ENCODE measurements at regions of chr2 and their contacts with region 1.

Region 1: GRCh38 chr2:202870431-202871299 is 901 bp downstream of the ICA1L start:
- DNase-seq: peak; percentile 88 to 89
- H3K4me3 ChIP-seq: peak overlapping the region; percentile 94
- H3K4me3 Mint-ChIP-seq: peak overlapping the region; percentile 78
- H3K27ac Mint-ChIP-seq: peak overlapping the region; percentile 77
- H3K4me1 ChIP-seq: peaks cover 5% of the 10 kb centered on the region; the same call in 1 of the 2 replicates
- H3K4me1 Mint-ChIP-seq: no peaks in the 10 kb centered on the region
- H3K27me3 ChIP-seq: no peaks in the 10 kb centered on the region
- H3K27me3 Mint-ChIP-seq: no peaks in the 10 kb centered on the region
- CTCF ChIP-seq: peak; percentile 71 to 79

Region 2: GRCh38 chr2:202577250-202578183 is 293.1 kb before region 1 on chr2:
- CTCF ChIA-PET with region 1: interaction called, 3 read pairs
- POLR2A ChIA-PET with region 1: no interaction called
- intact Hi-C with region 1: loop called (anchors 1 kb)
- DNase-seq: no peak
- H3K4me3 ChIP-seq: no peak overlapping the region
- H3K4me3 Mint-ChIP-seq: no peak overlapping the region
- H3K27ac Mint-ChIP-seq: no peak overlapping the region
- H3K4me1 ChIP-seq: no peaks in the 10 kb centered on the region
- H3K4me1 Mint-ChIP-seq: no peaks in the 10 kb centered on the region
- H3K27me3 ChIP-seq: no peaks in the 10 kb centered on the region
- H3K27me3 Mint-ChIP-seq: no peaks in the 10 kb centered on the region
- CTCF ChIP-seq: no peak

Region 3: DNA sequence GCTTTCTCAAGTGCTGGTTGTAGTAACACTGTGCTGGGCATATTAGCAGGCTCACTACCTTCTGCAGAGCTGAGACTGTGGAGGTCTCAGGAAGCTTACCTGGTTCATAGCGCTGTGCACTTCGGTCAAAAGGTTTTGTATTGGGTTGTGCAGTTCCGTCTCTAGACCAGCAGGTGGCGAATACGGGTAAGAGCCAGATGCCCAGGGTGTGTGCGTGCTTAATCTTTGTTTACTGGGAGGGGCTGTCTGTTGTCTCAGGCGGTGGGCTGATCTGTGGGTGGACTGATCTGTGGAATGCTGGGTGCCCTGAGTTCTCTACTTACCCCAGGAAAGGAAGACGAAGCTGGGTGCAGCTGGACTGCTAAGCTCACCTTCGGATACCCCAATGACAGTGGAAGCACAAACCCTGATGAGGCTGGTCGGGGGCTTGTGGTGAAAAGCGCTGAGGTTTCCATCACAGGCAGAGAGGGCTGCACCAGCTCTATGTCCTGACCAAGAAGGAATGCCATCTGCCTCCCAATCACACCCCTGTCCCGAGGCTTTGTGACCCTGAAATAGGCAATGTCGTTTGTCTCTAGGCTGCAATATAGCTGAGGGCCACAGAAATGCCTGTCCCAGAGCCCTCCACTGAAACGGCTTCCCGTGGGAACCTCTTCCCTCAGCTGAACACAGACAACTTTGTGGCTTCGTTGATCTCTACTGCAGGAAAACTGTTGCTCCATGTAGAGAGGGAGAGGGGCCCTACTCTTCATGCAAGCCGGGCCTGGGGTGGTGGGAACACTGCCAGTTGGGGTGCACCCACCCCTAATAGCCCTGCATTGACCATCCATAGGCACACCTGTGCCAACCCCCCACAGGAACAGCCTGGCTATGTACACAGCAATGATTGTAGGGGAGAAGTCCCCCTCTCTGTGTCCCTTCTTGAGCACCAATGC is 281.8 kb before region 1 on chr2:
- CTCF ChIA-PET with region 1: interaction called, 5 read pairs
- POLR2A ChIA-PET with region 1: no interaction called
- intact Hi-C with region 1: loop called (anchors 1 kb)
- DNase-seq: peak; percentile 81 to 86
- H3K4me3 ChIP-seq: no peak overlapping the region
- H3K4me3 Mint-ChIP-seq: peak overlapping the region; percentile 40
- H3K27ac Mint-ChIP-seq: no peak overlapping the region
- H3K4me1 ChIP-seq: peaks cover 11% of the 10 kb centered on the region
- H3K4me1 Mint-ChIP-seq: peaks cover 9% of the 10 kb centered on the region
- H3K27me3 ChIP-seq: no peaks in the 10 kb centered on the region
- H3K27me3 Mint-ChIP-seq: no peaks in the 10 kb centered on the region
- CTCF ChIP-seq: peak; percentile 85 to 86

Region 4: GRCh38 chr2:202634556-202635427 is 235.9 kb before region 1 on chr2 and contains the start of gene FAM117B:
- CTCF ChIA-PET with region 1: no interaction called
- POLR2A ChIA-PET with region 1: no interaction called
- intact Hi-C with region 1: loop called (anchors 5 kb)
- DNase-seq: peak; percentile 98
- H3K4me3 ChIP-seq: peak within 1 kb of the TSS; percentile 97
- H3K4me3 Mint-ChIP-seq: peak within 1 kb of the TSS; percentile 89
- H3K27ac Mint-ChIP-seq: peak within 1 kb of the TSS; percentile 80
- H3K4me1 ChIP-seq: peaks cover 9% of the 10 kb centered on the region; the same call in 1 of the 2 replicates
- H3K4me1 Mint-ChIP-seq: peaks cover 15% of the 10 kb centered on the region
- H3K27me3 ChIP-seq: no peaks in the 10 kb centered on the region
- H3K27me3 Mint-ChIP-seq: no peaks in the 10 kb centered on the region
- CTCF ChIP-seq: peak in 1 of 2 experiments; percentile 34
- total RNA-seq, gene FAM117B: 9.6 and 9.8 TPM in 2 replicates

Region 5: GRCh38 chr2:202750763-202751427 is 119.8 kb before region 1 on chr2:
- CTCF ChIA-PET with region 1: no interaction called
- POLR2A ChIA-PET with region 1: interaction called, 13 read pairs
- intact Hi-C with region 1: no loop called
- DNase-seq: peak in 1 of 2 experiments; percentile 4
- H3K4me3 ChIP-seq: no peak overlapping the region
- H3K4me3 Mint-ChIP-seq: no peak overlapping the region
- H3K27ac Mint-ChIP-seq: no peak overlapping the region
- H3K4me1 ChIP-seq: 0 out of 2 replicates have a peak, but pooled peaks cover 6% of the 10 kb centered on the region
- H3K4me1 Mint-ChIP-seq: no peaks in the 10 kb centered on the region
- H3K27me3 ChIP-seq: no peaks in the 10 kb centered on the region
- H3K27me3 Mint-ChIP-seq: no peaks in the 10 kb centered on the region
- CTCF ChIP-seq: no peak

Region 6: GRCh38 chr2:202831242-202832220 is 39.1 kb before region 1 on chr2:
- CTCF ChIA-PET with region 1: interaction called, 9 read pairs
- POLR2A ChIA-PET with region 1: no interaction called
- intact Hi-C with region 1: loop called (anchors 1 kb)
- DNase-seq: peak; percentile 65 to 78
- H3K4me3 ChIP-seq: no peak overlapping the region
- H3K4me3 Mint-ChIP-seq: peak overlapping the region; percentile 14
- H3K27ac Mint-ChIP-seq: no peak overlapping the region
- H3K4me1 ChIP-seq: 0 out of 2 replicates have a peak, but pooled peaks cover 6% of the 10 kb centered on the region
- H3K4me1 Mint-ChIP-seq: peaks cover 9% of the 10 kb centered on the region
- H3K27me3 ChIP-seq: no peaks in the 10 kb centered on the region
- H3K27me3 Mint-ChIP-seq: no peaks in the 10 kb centered on the region
- CTCF ChIP-seq: peak; percentile 65 to 82

Measured in Caco-2 (cell line).